ENCODE measurements at regions of chr3 and their contacts with region 1.

Region 1: DNA sequence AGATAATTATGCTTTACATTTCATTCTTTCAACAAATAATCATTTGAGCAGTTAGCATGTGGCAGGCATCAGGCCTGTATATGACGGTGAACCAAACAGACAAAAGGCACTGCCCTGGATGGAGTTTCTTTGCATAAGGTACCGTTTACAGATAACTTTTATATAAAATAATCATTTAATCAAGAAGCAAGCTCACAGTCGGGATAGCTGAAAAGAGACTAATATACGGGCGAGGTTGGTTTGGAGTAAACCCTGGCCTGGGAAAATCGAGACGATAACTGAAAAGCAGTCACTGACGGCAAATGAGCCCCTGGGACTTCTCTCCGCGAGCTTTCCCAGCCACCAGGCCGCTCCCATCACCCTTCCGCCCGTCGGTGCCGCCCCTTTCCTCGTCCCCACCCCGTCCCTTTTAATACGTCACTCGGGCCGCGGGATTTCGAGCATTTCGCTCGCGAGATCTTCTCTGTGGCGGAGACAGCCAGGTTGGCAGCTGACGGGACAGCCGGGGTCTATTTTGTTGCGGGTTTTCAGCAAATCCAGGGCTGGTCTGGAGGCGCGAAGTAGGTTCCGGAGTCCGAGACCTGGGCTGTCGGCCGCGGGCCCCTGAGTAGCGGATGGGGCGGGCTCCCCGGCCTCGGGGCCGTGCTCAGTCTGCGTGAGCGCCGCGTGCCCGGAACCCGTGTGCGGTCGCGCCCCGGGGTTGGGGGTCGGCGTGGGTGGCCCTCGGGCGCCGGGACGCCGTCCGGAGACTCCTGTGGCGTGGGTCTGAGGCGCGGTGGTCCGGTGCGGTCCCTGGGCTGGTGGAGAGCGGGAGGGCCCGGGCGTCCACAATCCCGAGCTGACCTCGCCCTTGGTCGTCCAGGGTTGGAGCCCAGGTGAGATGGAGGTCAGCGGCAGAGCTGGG is at the start of gene NMD3:
- DNase-seq: peak; percentile 95
- H3K4me3 ChIP-seq: peak within 1 kb of the TSS; percentile 68 to 96 (median 94)
- H3K27ac ChIP-seq: peak within 1 kb of the TSS; percentile 83
- H3K4me1 ChIP-seq: peaks cover 27% of the 10 kb centered on the region
- H3K27me3 ChIP-seq: no peaks in the 10 kb centered on the region
- CTCF ChIP-seq: no peak
- POLR2A ChIP-seq: peak; percentile 93
- total RNA-seq, gene NMD3: 53.8 and 57.9 TPM in 2 replicates

Region 2: GRCh38 chr3:160697628-160698382 is 523.3 kb before region 1 on chr3:
- CTCF ChIA-PET with region 1: no interaction called
- POLR2A ChIA-PET with region 1: no interaction called
- dilution Hi-C with region 1: no loop called
- intact Hi-C with region 1: loop called (anchors 5 kb)
- DNase-seq: peak; percentile 63
- H3K4me3 ChIP-seq: no peak overlapping the region
- H3K27ac ChIP-seq: no peak overlapping the region
- H3K4me1 ChIP-seq: peaks cover 13% of the 10 kb centered on the region
- H3K27me3 ChIP-seq: no peaks in the 10 kb centered on the region
- CTCF ChIP-seq: no peak
- POLR2A ChIP-seq: no peak

Region 3: GRCh38 chr3:160921020-160921635 is 300.0 kb before region 1 on chr3:
- CTCF ChIA-PET with region 1: interaction called, 3 read pairs
- POLR2A ChIA-PET with region 1: no interaction called
- dilution Hi-C with region 1: no loop called
- intact Hi-C with region 1: loop called (anchors 1 kb)
- DNase-seq: peak; percentile 55
- H3K4me3 ChIP-seq: no peak overlapping the region
- H3K27ac ChIP-seq: no peak overlapping the region
- H3K4me1 ChIP-seq: no peaks in the 10 kb centered on the region
- H3K27me3 ChIP-seq: no peaks in the 10 kb centered on the region
- CTCF ChIP-seq: peak; percentile 75 to 77
- POLR2A ChIP-seq: no peak

Region 4: GRCh38 chr3:160968761-160969160 is 252.3 kb before region 1 on chr3:
- CTCF ChIA-PET with region 1: no interaction called
- POLR2A ChIA-PET with region 1: no interaction called
- dilution Hi-C with region 1: no loop called
- intact Hi-C with region 1: loop called (anchors 5 kb)
- DNase-seq: no peak
- H3K4me3 ChIP-seq: no peak overlapping the region
- H3K27ac ChIP-seq: no peak overlapping the region
- H3K4me1 ChIP-seq: peaks cover 10% of the 10 kb centered on the region
- H3K27me3 ChIP-seq: no peaks in the 10 kb centered on the region
- CTCF ChIP-seq: no peak
- POLR2A ChIP-seq: no peak

Region 5: DNA sequence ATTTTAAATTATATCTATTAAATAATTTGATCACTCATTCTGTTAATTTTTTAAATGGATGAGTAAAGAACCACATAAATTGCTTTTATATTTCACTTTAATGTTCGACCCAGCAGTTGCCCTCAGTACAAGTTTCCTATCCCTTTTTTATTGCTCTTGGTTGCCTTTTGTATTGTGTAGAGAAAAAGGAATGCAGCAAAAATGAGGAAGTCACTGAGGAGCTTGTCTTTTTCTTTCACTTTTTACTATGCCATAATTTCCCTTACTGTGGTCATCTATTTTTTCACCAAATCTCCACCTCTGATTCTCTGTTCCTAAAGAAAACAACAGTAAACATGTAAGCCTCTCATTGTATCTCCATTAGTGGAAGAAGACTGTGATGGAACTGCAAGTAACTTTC is 238.6 kb before region 1 on chr3:
- CTCF ChIA-PET with region 1: no interaction called
- POLR2A ChIA-PET with region 1: no interaction called
- dilution Hi-C with region 1: no loop called
- intact Hi-C with region 1: no loop called
- DNase-seq: no peak
- H3K4me3 ChIP-seq: no peak overlapping the region
- H3K27ac ChIP-seq: no peak overlapping the region
- H3K4me1 ChIP-seq: no peaks in the 10 kb centered on the region
- H3K27me3 ChIP-seq: no peaks in the 10 kb centered on the region
- CTCF ChIP-seq: no peak
- POLR2A ChIP-seq: no peak

Region 6: GRCh38 chr3:161104561-161105551 is 116.2 kb before region 1 on chr3 and contains the start of gene B3GALNT1:
- CTCF ChIA-PET with region 1: no interaction called
- POLR2A ChIA-PET with region 1: no interaction called
- dilution Hi-C with region 1: no loop called
- intact Hi-C with region 1: loop called (anchors 2 kb)
- DNase-seq: peak; percentile 69
- H3K4me3 ChIP-seq: peak within 1 kb of the TSS; percentile 27 to 84 (median 52)
- H3K27ac ChIP-seq: peak within 1 kb of the TSS; percentile 26
- H3K4me1 ChIP-seq: peaks cover 3% of the 10 kb centered on the region
- H3K27me3 ChIP-seq: no peaks in the 10 kb centered on the region
- CTCF ChIP-seq: peak in 1 of 2 donors; percentile 0
- POLR2A ChIP-seq: no peak
- total RNA-seq, gene B3GALNT1: 13.7 and 29.4 TPM in 2 replicates

Region 7: DNA sequence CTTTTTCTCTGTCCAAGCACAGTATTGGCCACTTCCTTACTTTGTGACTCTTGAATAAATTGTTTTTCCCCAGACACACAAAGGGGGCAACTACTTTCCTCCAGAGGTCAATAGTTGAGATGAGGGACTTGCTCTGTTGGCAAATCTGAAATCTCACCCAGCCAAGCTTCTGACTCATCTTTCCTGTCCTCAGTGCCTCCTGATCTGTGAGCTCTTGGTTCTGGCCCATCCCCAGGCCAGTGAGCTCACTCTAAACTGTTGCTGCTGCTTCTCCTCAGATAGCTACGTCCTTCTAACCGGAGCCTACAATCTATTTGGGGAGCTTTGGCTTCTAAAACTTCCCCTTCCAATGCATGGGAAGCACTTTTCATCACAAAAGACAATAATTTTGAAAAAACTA is 50.0 kb before region 1 on chr3:
- CTCF ChIA-PET with region 1: no interaction called
- POLR2A ChIA-PET with region 1: no interaction called
- dilution Hi-C with region 1: no loop called
- intact Hi-C with region 1: no loop called
- DNase-seq: peak; percentile 84
- H3K4me3 ChIP-seq: no peak overlapping the region
- H3K27ac ChIP-seq: no peak overlapping the region
- H3K4me1 ChIP-seq: peaks cover 25% of the 10 kb centered on the region
- H3K27me3 ChIP-seq: no peaks in the 10 kb centered on the region
- CTCF ChIP-seq: no peak
- POLR2A ChIP-seq: peak; percentile 21

Region 8: DNA sequence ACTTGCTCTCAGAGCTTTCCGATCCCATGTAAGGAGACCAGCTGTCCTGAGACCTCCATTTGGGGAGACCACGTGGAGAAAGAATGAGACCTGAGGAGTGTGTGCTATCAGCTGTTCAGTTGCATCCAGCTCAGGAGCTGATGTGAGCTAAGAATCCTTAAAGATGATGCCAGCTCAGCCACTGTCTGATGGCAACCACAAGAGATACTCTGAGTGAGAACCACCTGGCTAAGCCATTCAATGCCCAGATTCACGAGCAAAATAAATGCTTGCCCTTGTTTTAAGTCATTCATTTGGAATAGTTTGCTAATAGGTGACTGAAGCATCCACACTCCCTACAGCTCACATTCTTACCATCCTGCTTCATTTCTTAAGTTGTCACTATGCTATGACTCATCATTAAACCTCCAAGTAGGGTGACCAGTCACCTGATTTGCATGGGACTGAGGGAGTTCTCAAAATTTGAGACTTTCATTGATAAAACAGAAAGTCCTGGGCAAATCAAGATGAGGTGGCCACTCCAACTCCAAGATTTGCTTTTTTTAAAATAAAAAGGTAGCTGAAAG is 93.8 kb after region 1 on chr3:
- CTCF ChIA-PET with region 1: no interaction called
- POLR2A ChIA-PET with region 1: no interaction called
- dilution Hi-C with region 1: no loop called
- intact Hi-C with region 1: loop called (anchors 2 kb)
- DNase-seq: peak; percentile 10
- H3K4me3 ChIP-seq: no peak overlapping the region
- H3K27ac ChIP-seq: peak overlapping the region; percentile 84
- H3K4me1 ChIP-seq: peaks cover 23% of the 10 kb centered on the region
- H3K27me3 ChIP-seq: no peaks in the 10 kb centered on the region
- CTCF ChIP-seq: no peak
- POLR2A ChIP-seq: no peak